Testis (tissue), 5 donors: ENCODE measurements at regions of chr22 and their contacts with region 1.

Region 1: GRCh38 chr22:37428649-37429586 is 1.6 kb upstream of the ELFN2 start:
- DNase-seq: peak; percentile 38
- H3K4me3 ChIP-seq: no peak overlapping the region
- H3K27ac ChIP-seq: no peak overlapping the region
- H3K4me1 ChIP-seq: peaks cover 5% of the 10 kb centered on the region
- H3K27me3 ChIP-seq: no peaks in the 10 kb centered on the region
- CTCF ChIP-seq: peak; percentile 27 to 61 (median 33)
- POLR2A ChIP-seq: no peak

Region 2: DNA sequence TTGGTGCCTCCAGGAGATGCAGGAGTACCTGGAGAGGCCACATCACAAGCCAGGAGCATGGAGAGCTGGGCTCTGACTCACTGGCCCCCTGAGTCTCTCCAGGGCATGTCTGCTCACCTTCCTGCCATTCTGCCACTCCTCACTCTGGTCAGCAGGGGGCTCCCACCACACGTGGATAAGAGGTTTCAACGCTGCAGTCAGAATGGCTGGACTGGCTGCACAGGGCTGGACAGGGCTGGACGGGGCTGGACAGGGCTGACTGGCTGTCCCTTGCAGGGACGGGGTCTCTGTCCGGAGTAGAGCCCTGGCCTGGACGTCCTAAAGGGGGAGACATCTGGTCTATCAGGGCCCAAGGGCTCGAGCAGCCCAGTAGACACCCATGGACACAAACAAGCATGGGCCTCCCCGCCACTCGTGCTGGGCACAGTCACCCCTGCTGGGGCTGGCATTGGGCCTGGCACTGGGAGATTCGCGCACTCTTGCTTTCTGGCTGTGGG is 112.0 kb before region 1 on chr22:
- intact Hi-C with region 1: loop called (anchors 10 kb)
- DNase-seq: peak; percentile 82
- H3K4me3 ChIP-seq: no peak overlapping the region
- H3K27ac ChIP-seq: no peak overlapping the region
- H3K4me1 ChIP-seq: no peaks in the 10 kb centered on the region
- H3K27me3 ChIP-seq: no peaks in the 10 kb centered on the region
- CTCF ChIP-seq: peak; percentile 59 to 76 (median 63)
- POLR2A ChIP-seq: no peak